Psoas muscle (tissue), 8 donors: ENCODE measurements at regions of chr20 and their contacts with region 1.

Region 1: DNA sequence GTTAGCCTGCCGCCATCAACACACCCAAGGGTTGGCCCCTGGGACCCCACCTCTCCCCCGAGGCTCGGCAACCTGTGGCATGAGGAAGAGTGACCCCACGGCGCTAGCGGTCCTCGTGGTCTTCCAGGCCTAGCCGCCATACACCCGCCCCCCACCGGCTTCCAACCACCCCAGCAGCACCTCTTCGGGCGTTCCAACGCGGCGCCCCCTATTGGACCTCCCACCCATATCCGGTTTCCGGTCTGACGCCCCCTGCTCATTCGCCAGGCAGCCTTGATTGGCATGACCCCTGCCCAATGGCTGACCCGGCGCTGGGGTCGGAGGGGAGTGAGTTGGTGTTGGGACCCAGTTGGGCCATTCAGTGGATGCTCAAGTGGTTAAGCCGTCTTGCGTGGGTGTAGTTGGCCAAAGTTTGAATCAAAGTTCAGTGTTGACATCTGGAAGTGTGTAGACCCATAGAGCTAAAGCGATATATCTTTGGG is at the start of gene GNAS-AS1:
- DNase-seq: peak; percentile 75 to 90
- ATAC-seq: peak; percentile 73 to 88 (median 81)
- H3K4me3 ChIP-seq: peak within 1 kb of the TSS; percentile 59
- H3K27ac ChIP-seq: no peak within 1 kb of the TSS
- H3K4me1 ChIP-seq: no peaks in the 10 kb centered on the region
- H3K27me3 ChIP-seq: peaks cover 0 to 51% (median 9%) of the 10 kb centered on the region in 3 donors
- CTCF ChIP-seq: no peak
- total RNA-seq, gene GNAS-AS1: 0.26 to 1.0 (median 0.65) TPM in 3 of 4 donors, not detected in the other

Region 2: DNA sequence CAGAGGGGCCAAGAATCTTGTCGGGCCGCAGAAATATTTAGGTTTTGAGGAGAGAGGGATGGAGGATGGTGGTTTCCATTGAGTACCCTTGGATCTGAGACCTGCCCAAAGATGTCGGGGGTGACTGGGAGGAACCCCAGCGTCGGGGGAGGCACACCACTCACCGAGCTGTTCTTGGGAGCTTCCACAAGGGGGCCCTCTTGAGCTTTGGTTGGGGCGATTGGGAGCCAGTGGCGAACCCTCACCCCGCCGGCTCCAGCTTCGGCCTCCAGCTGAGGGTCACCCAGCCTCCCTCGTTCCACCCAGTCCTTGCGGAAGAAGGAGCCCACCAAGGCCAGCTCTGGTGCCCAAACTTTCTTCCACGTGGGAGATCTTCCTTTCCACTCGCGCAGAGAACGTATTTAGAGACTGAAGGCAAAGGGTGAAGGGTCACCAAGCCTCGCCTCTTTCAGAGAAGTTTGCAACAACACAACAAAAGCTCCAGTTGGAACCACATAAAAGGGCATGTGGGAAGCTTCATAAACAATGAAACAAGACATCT is 369.2 kb before region 1 on chr20:
- intact Hi-C with region 1: loop called in 1 of 2 experiments (anchors 10 kb)
- DNase-seq: peak; percentile 45 to 70
- ATAC-seq: peak in 1 of 4 donors; percentile 67
- H3K4me3 ChIP-seq: no peak overlapping the region
- H3K27ac ChIP-seq: no peak overlapping the region
- H3K4me1 ChIP-seq: no peaks in the 10 kb centered on the region
- H3K27me3 ChIP-seq: peaks cover 0 to 5% (median 5%) of the 10 kb centered on the region in 3 donors
- CTCF ChIP-seq: peak; percentile 39

Region 3: DNA sequence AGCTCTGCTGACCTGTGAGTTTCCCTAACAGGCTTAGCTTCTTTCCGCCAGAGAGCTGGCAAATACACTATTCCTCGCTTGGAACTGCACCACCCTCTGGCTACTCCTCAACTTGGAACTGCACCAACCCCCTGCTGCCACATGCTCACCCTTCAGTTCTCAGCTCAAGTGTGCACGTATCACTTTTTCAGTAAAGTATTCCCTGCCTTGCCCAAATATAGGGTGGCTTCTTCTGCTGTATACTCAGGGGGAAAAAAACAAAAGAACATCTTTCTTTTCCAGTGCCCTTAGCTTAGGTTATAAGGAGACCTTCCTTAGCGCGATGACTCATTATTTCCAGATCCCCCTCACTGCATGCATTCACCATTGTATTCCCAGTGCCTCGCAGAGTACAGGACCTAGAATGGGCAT is 21.2 kb before region 1 on chr20:
- intact Hi-C with region 1: no loop called
- DNase-seq: peak in 1 of 2 donors; percentile 64
- ATAC-seq: peak; percentile 79 to 85 (median 82)
- H3K4me3 ChIP-seq: no peak overlapping the region
- H3K27ac ChIP-seq: peak overlapping the region; percentile 56
- H3K4me1 ChIP-seq: peaks cover 29% of the 10 kb centered on the region
- H3K27me3 ChIP-seq: no peaks in the 10 kb centered on the region
- CTCF ChIP-seq: no peak